Activated T-helper 1 cell treated with anti-CD3 and anti-CD28 coated beads, Interleukin-12 subunit alpha, Interleukin-12 subunit beta, Interleukin-2, Interleukin-4 antibody, amounts not matched to agents 30 ng/mL and 10 ng/mL and 1 ng/mL, durations not matched to agents 14 hours and 24 hours and 36 hours (primary cell): ENCODE measurements at regions of chr5 and their contacts with region 1.

Region 1: GRCh38 chr5:113050721-113051382 is 74.3 kb downstream of the DCP2 start:
- DNase-seq: peak; percentile 14
- H3K4me3 Mint-ChIP-seq: peak overlapping the region; percentile 2
- H3K27ac Mint-ChIP-seq: peak overlapping the region; percentile 56
- H3K4me1 Mint-ChIP-seq: peaks cover 28% of the 10 kb centered on the region
- H3K27me3 Mint-ChIP-seq: no peaks in the 10 kb centered on the region

Region 2: DNA sequence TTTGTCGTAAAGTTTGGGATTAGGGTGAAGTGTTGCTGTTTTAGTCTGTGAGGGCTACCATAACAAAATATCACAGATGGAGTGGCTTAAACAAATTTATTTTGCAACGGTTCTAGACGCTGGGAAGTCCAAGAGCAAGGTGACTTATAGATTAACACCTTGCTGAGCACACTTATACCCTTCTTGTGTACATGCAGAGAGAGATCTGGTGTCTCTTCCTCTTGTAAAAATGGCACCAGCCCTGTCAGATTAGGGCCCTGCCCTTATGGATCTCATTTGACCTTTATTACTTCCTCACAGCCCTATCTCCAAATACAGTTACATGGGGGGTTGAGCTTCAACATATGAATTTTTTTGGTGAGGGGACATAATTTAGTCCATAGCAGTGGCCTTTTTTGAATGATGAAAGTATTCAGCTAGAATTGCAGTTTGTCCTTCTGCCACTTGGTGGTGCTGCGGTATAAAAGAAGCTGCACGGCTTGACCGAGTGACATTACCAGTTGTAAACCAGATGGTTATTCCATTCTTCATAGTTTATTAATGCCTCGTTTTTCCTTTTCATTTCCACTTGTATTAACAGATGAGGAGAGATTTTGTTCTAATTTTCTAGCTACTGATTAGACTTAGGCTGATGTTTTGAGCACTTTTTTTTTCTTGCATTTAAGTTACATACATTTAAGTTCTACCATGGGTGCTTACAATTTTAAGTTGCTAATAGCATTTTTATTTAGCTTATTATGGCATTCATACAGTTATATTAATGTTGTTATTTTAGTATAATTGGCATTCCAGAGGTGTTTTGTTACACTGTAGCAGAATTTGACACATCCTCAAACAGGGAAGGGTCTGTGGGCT is 54.9 kb before region 1 on chr5:
- intact Hi-C with region 1: no loop called
- DNase-seq: peak; percentile 61
- H3K4me3 Mint-ChIP-seq: no peak overlapping the region
- H3K27ac Mint-ChIP-seq: no peak overlapping the region
- H3K4me1 Mint-ChIP-seq: peaks cover 23% of the 10 kb centered on the region
- H3K27me3 Mint-ChIP-seq: no peaks in the 10 kb centered on the region

Region 3: DNA sequence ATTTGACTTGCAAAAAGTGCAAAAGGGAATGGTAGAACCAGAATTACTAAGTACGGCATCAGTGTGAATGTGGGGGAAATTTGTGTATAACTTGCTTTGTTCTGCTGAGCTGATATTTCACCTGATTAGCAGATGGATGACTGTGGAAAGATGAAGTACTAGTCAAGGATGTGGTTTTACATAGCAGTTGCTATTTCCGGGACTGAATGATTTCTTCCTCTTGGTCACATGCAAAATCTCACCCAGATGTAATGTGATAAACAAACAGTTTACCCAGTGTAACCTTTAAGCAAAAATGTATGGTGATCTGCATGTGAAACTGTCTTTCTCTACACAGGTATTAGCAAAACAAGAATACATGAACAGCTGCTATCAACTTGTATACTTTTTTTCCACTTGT is 28.2 kb before region 1 on chr5:
- intact Hi-C with region 1: loop called (anchors 2 kb)
- DNase-seq: peak; percentile 27
- H3K4me3 Mint-ChIP-seq: peak overlapping the region; percentile 43
- H3K27ac Mint-ChIP-seq: peak overlapping the region; percentile 61
- H3K4me1 Mint-ChIP-seq: peaks cover 62% of the 10 kb centered on the region
- H3K27me3 Mint-ChIP-seq: no peaks in the 10 kb centered on the region